ENCODE measurements at regions of chr5 and their contacts with region 1.

Region 1: DNA sequence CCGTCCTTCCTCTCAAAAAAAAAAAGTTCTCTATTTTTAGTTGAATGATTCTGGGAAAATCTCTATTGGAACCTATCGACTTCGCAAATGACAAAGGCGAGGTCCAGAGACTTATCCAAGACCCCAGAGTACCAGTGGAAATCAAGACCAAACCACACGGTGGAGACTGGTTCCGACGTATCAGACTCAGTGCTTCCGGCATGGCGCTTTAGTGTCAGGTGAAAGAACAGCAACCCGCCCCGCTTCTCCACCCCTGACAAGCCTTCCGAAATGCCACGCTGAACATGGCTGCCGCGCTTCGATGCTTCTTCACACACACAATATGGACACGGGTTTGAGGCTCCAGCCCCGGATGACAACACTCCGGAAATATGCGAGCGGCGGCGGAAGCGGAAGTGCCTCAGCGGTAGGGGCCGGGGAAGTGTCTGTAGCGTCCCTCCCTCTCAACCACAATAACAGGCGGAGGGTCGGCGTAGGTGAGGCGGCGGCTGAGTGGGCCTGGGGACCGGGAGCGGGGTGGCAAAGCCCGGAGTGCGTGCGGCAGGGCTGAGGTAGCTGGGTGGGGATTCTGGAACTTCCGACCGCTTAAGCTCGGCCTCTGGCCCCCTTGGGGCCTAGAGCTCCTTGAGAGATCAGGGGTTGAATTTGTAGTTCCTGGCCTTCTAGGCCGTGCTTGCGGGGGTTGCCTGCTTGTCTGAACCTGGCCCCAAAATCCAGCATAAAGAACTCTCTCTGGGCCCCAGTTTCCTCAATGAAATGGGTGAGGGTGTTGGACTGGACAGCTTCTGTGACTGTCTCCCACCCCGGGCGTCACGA is at the start of gene FBXO38:
- DNase-seq: peak; percentile 95
- H3K4me3 Mint-ChIP-seq: peak within 1 kb of the TSS; percentile 94
- H3K27ac Mint-ChIP-seq: peak within 1 kb of the TSS; percentile 99
- H3K4me1 Mint-ChIP-seq: peaks cover 72% of the 10 kb centered on the region
- H3K27me3 Mint-ChIP-seq: no peaks in the 10 kb centered on the region
- total RNA-seq, gene FBXO38: 64.3 and 80.3 TPM in 2 replicates

Region 2: DNA sequence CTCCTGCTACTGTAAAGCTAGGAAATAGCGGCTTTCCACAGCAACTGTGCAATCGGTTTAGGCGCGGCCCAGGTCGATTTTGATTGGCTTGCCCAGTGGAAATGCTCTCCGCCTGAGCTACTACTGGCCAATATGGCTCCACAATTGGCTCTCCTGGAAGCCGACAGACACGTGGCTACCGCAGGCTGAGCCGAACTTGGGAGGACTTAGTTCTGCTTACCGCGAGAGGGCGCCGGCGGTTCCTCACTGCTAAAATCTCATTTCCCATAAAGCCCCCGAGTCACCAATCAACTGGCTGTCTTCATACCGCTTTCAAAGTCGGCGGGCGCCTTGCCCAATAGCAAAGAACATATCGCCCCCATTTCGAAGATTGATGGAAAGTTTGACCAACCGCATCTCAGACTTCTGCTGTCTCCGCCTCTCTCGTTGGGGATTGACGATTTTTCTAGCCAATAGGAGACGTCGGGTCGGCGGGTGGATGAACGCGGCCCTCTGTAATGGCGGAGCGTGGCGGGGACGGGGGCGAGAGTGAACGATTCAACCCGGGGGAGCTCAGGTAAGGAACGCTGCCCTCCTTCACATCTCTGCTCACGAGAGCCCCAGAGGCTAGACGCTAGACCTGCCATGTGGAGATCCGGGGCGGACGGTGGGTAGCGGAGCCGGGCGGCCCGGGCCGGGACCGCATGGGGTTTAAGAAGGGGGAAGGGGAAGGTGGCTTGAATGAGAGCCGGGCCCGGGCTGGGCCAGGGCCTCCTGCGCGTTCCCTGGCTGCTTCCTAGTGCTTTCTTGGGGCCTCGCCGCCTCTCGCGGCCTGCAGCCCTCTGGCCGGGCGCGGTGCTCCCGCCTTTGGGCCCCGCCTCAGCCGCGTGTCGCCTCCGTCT is 1936.7 kb before region 1 on chr5 and contains the start of gene TCERG1:
- intact Hi-C with region 1: loop called (anchors 5 kb)
- DNase-seq: peak; percentile 97
- H3K4me3 Mint-ChIP-seq: peak within 1 kb of the TSS; percentile 95
- H3K27ac Mint-ChIP-seq: peak within 1 kb of the TSS; percentile 98
- H3K4me1 Mint-ChIP-seq: peaks cover 33% of the 10 kb centered on the region
- H3K27me3 Mint-ChIP-seq: no peaks in the 10 kb centered on the region
- total RNA-seq, gene TCERG1: 152 and 160 TPM in 2 replicates

Region 3: DNA sequence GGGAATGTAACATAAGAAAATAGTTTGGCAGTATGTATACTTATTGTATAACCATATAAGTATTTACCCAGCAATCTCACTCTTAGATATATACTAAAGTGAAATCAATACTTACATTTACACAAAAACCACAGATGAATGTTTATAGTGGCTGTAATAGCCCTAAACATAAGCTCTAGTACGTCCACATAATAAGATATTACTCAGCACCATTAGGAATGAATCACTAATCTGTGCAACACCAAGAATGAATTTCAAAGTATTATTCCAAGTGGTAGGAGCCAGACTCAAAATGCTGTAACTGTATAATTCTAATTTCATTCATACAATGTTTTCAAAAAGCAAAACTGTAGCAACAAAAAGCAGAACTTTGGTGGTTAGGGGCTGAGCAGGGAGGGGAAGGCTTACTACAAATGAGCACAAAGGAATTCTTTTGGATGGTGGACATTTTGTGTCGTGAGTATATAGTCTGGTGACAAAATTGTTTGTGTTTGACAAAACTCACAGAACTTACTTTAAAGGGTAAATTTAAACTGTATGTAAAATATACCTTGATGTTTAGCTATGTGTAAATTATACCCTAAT is 465.6 kb before region 1 on chr5:
- intact Hi-C with region 1: no loop called
- DNase-seq: no peak
- H3K4me3 Mint-ChIP-seq: no peak overlapping the region
- H3K27ac Mint-ChIP-seq: no peak overlapping the region
- H3K4me1 Mint-ChIP-seq: no peaks in the 10 kb centered on the region
- H3K27me3 Mint-ChIP-seq: no peaks in the 10 kb centered on the region

Region 4: GRCh38 chr5:148090773-148091221 is 293.0 kb before region 1 on chr5:
- intact Hi-C with region 1: no loop called
- DNase-seq: no peak
- H3K4me3 Mint-ChIP-seq: no peak overlapping the region
- H3K27ac Mint-ChIP-seq: no peak overlapping the region
- H3K4me1 Mint-ChIP-seq: no peaks in the 10 kb centered on the region
- H3K27me3 Mint-ChIP-seq: peaks cover 2% of the 10 kb centered on the region

Region 5: GRCh38 chr5:148186248-148186996 is 197.3 kb before region 1 on chr5:
- intact Hi-C with region 1: loop called (anchors 1 kb)
- DNase-seq: no peak
- H3K4me3 Mint-ChIP-seq: peak overlapping the region; percentile 7
- H3K27ac Mint-ChIP-seq: peak overlapping the region; percentile 52
- H3K4me1 Mint-ChIP-seq: peaks cover 24% of the 10 kb centered on the region
- H3K27me3 Mint-ChIP-seq: no peaks in the 10 kb centered on the region

Region 6: GRCh38 chr5:148620696-148621095 is 236.9 kb after region 1 on chr5:
- intact Hi-C with region 1: loop called (anchors 2 kb)
- DNase-seq: peak; percentile 48
- H3K4me3 Mint-ChIP-seq: no peak overlapping the region
- H3K27ac Mint-ChIP-seq: peak overlapping the region; percentile 28
- H3K4me1 Mint-ChIP-seq: peaks cover 36% of the 10 kb centered on the region
- H3K27me3 Mint-ChIP-seq: peaks cover 24% of the 10 kb centered on the region

Region 7: GRCh38 chr5:148805326-148806290 is 421.8 kb after region 1 on chr5:
- intact Hi-C with region 1: loop called (anchors 5 kb)
- DNase-seq: no peak
- H3K4me3 Mint-ChIP-seq: peak overlapping the region; percentile 60
- H3K27ac Mint-ChIP-seq: peak overlapping the region; percentile 72
- H3K4me1 Mint-ChIP-seq: peaks cover 64% of the 10 kb centered on the region
- H3K27me3 Mint-ChIP-seq: no peaks in the 10 kb centered on the region

Region 8: DNA sequence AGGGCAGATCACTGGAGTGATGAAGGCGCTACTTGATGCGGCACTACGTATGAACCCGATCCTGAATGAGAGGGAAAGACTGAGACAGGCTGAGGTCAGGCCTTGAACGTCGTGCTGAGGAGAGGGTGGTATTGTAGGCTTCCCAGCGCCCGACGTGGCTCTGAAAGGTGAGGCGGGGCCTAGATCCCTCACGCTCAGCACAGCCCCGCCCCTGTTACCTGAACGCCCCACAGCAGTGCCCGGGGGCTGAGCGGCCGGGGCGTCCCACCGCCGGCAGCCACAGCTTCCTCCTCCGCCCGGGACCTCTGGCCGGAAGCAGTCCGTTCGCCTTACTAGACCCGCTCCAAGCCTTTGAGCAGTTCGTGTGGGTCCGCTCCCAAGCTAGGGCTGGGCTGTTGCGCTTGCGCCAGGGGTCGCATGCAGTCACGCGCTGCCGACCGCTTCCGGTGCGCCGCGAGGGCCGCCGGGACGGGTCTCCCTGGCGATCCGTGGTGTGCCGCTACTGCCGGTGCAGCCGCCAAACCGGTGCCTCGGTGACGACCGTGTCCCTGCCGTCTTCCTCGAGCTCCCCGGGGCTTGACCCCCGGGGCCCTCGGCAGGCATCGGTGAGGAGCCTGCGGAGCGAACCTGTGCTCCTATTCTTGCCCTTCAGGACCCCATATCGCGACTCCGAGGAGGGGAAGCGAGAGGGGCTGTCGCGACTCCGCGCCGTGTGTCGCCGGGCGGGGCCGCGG is 1616.7 kb after region 1 on chr5 and contains the starts of genes HMGXB3 and TIGD6:
- intact Hi-C with region 1: loop called (anchors 2 kb)
- DNase-seq: peak; percentile 82
- H3K4me3 Mint-ChIP-seq: peak within 1 kb of the TSS; percentile 99
- H3K27ac Mint-ChIP-seq: peak within 1 kb of the TSS; percentile 98
- H3K4me1 Mint-ChIP-seq: peaks cover 52% of the 10 kb centered on the region
- H3K27me3 Mint-ChIP-seq: no peaks in the 10 kb centered on the region
- total RNA-seq, gene HMGXB3: 49.1 and 49.9 TPM in 2 replicates
- total RNA-seq, gene TIGD6: 2.4 TPM in 2 replicates

Measured in activated T-helper 1 cell treated with anti-CD3 and anti-CD28 coated beads, Interleukin-12 subunit alpha, Interleukin-12 subunit beta, Interleukin-2, Interleukin-4 antibody, amounts not matched to agents 30 ng/mL and 10 ng/mL and 1 ng/mL, durations not matched to agents 14 hours and 24 hours and 36 hours (primary cell).